Tibial artery (tissue), 4 donors: ENCODE measurements at regions of chr12 and their contacts with region 1.

Region 1: GRCh38 chr12:105053116-105053572 is 31.1 kb downstream of the ALDH1L2 start:
- DNase-seq: peak; percentile 83 to 90
- H3K4me3 ChIP-seq: no peak overlapping the region
- H3K27ac ChIP-seq: no peak overlapping the region
- H3K4me1 ChIP-seq: no peaks in the 10 kb centered on the region
- H3K27me3 ChIP-seq: no peaks in the 10 kb centered on the region
- CTCF ChIP-seq: peak; percentile 89

Region 2: DNA sequence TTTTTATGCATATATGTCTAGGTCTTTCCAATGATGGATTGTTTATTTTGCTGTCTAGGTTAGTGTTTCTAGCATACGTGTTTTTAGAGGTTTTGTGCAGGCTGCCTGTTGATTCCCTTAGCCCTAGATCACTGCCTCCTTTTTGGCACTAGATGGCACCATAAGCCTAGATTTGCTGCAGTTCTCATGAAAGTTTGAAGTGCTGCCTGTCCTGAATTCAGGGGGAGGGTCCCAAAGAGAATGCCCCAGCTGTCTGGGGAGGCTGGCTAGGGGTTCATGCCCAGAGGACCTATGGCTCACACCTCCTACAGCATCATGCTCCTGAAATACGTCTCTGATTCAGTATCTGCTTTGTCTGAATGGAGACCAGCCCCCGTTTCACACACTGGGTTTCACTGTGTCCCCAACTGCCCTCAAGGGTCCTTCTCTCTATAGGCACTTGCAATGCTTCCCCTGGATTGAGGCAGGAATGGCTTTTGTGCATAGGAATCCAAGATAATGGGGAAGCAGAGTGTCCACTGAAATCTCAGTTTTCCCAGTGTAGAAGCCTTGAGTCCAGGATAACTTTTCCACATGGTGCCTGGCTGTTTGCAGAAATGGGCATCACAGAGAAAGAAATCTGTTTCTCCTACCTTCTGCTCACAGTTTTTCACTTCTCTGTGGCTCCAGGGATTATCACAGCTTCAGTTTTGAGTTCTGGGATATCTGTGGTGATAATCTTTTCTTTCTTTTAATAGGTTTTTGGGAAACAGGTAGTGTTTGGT is 851.7 kb before region 1 on chr12:
- intact Hi-C with region 1: loop called (anchors 10 kb)
- DNase-seq: peak in 1 of 2 donors; percentile 37
- H3K4me3 ChIP-seq: no peak overlapping the region
- H3K27ac ChIP-seq: no peak overlapping the region
- H3K4me1 ChIP-seq: peaks cover 0 to 16% (median 7%) of the 10 kb centered on the region in 4 donors
- H3K27me3 ChIP-seq: no peaks in the 10 kb centered on the region
- CTCF ChIP-seq: peak; percentile 79 to 81

Region 3: DNA sequence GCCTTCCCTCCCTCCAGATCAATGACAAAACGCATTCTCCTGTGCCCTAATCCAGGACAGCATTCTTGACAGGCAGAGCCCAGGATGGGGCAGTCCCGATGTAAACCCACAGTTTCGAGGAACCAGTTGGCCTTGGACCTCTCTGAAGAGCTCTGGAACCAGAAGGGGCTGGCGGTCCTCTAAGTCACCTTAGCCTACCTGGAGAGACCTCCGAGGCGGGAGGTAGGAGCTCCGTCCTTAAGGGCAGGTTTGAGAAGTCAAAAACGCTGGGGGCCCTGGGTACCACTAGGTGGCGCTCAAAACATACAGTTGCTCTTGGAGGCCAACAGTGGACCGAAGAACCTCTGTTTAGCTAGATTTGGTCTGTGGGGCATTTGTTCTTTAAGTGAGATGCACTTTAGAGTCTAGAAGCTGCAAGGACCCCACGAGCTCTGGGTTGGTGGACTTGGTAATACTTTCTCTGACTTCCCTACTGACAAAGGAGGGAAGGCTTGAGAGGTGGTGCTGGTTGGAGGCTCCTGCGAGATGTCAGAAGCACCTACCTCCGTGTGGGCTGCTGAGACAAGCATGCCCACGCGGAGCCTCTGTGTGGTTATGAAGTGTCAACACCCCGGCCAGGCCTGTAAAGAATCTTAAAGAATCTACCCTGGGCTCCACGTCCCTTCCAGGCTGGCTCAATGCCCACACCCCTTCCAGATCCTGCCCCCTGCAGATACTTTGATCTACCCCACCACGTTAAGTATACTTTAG is 671.2 kb before region 1 on chr12:
- intact Hi-C with region 1: loop called (anchors 5 kb)
- DNase-seq: peak; percentile 76 to 85
- H3K4me3 ChIP-seq: peak overlapping the region in 1 of 2 donors; percentile 11
- H3K27ac ChIP-seq: no peak overlapping the region
- H3K4me1 ChIP-seq: peaks cover 0 to 9% (median 4%) of the 10 kb centered on the region in 4 donors
- H3K27me3 ChIP-seq: no peaks in the 10 kb centered on the region
- CTCF ChIP-seq: peak; percentile 91 to 97

Region 4: DNA sequence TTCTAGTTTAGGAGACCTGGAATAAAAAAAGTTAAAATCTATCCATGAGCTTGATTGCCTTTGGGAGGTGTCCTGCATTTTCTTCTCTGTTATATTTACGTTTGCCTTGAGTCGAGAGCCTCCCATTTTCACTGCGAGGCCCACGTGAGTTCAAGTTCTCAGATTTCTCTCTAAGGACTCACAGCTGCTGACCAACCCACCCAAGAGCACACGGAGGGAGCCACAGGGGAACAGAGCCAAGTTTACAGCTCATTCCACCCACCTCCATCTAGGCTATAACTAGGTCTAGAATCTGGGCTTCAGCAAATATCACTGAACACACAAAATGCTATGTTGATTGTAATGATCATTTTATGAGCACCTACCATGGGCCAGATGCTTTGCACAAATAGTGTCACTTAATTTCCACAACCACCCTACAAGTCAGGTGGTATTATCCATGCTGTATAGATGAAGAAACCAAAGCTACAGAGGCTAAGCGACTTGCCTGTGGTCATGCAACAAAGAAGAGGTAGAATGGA is 14.4 kb after region 1 on chr12:
- intact Hi-C with region 1: no loop called
- DNase-seq: no peak
- H3K4me3 ChIP-seq: no peak overlapping the region
- H3K27ac ChIP-seq: no peak overlapping the region
- H3K4me1 ChIP-seq: no peaks in the 10 kb centered on the region
- H3K27me3 ChIP-seq: no peaks in the 10 kb centered on the region
- CTCF ChIP-seq: no peak